MCF 10A (cell line): ENCODE measurements at regions of chr7 and their contacts with region 1.

Region 1: DNA sequence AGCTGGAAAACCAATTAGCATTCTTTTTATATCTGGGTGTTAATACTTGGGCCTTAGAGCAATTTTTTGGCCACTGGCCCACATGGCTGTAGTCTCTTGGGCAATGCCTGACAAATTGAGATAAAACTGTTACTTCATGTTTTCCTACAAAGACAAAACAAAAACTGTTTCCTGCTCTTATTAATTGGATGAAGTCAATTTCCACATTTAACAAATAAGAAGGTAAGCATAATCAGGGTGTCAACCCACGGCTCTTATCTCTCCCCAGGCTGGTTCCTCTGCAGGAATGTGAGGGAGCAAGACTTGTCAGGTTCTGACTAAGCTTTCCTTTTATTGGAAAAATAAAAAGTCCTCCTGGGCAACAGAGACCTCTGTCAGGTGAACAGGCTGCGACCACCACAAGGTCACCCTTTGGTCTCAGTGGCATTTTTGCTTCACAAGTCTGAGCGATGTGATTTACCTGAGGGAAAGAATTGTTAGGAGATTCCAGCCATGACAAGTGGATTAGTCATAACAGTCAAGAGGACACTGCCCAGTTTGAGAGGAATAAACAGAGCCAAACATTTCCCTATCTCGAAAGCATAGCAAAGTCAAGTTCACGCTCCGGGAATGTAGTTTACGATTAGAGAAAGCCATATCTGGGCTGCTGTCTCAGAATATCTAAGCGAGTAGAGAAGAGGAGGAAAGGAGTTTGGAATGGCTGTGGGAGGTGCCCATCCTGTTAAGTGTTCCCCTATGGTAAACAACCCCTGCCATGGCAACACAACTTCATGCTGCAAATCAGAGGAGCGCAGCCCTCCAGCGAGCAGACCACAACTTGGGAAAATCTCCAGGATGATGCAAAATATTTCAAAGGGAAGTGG is 144.4 kb downstream of the TES start:
- DNase-seq: peak; percentile 91
- H3K4me3 Mint-ChIP-seq: peak overlapping the region; percentile 69
- H3K27ac Mint-ChIP-seq: peak overlapping the region; percentile 98
- H3K4me1 Mint-ChIP-seq: peaks cover 42% of the 10 kb centered on the region
- H3K27me3 Mint-ChIP-seq: no peaks in the 10 kb centered on the region
- CTCF ChIP-seq: no peak

Region 2: DNA sequence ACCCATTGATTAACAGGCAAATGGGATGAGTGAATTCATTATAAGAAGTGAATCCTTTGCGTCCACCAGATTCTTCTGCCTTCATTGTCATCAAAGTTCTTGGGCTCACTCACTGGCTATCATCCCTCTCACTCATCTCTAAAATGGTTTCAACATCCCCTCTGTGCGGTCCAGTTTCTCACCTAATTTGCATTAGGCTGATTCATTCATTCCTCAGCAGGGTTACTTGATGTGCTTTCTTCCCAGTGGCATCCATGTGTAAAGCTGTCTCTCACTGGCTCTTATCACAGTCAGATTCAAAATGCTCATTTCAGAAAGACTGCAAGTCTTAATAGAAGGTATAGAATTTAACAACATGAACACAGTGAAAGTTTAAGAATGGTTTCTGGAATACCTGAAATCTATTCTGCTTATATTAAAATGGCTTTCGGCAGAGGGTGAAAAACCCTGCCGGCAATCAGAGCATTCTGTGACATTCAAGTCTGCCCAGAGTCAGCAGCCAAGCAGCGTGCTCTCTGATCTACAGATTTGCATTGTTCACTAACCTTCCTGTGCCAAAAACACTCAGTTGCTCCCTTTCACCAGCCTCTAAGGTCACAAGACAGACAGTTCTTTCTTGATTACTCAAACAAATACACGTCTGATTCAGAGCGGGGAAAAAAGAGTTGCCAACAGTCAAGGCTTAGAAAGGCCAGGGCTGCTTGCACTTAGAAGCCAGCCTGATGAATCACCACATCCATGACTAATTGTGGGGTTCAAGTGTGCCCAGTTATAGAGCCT is 37.8 kb before region 1 on chr7:
- CTCF ChIA-PET with region 1: no interaction called
- POLR2A ChIA-PET with region 1: interaction called, 7 read pairs
- intact Hi-C with region 1: loop called (anchors 1 kb)
- DNase-seq: peak; percentile 99
- H3K4me3 Mint-ChIP-seq: peak overlapping the region; percentile 42
- H3K27ac Mint-ChIP-seq: peak overlapping the region; percentile 88
- H3K4me1 Mint-ChIP-seq: peaks cover 17% of the 10 kb centered on the region
- H3K27me3 Mint-ChIP-seq: no peaks in the 10 kb centered on the region
- CTCF ChIP-seq: no peak

Region 3: DNA sequence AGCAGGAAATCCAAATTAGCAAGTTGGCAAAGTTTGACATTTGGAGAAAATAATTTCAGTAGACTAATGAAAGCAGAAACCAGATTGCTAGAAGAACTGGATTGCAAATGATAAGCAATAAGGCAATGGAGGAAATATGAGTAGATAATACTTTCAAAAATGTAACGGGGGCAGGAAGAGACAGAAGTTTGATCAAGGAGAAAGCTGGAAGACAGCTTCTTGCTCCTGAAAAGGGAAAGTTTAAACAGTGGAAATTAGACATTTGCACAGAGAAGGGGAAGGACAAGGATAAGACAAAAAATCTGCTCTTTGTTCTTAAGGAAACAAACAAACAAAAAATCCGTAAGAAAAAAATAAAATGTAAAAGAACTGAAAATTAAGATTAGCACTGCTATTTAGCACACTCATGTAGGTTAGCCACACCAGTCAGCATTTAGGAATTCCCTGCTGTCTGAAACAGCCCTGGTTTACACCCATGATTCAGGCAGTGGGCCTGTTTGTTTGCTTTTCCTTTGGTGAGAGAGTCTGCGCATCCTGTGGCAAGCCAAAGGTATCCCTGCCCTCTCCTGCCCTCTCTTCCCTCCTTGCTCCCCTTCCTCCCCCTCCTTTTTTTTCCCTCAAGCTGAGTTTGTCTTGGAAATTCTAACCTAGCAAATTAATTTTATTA is 40.5 kb after region 1 on chr7:
- CTCF ChIA-PET with region 1: no interaction called
- POLR2A ChIA-PET with region 1: interaction called, 6 read pairs
- intact Hi-C with region 1: loop called (anchors 1 kb)
- DNase-seq: peak; percentile 89
- H3K4me3 Mint-ChIP-seq: no peak overlapping the region
- H3K27ac Mint-ChIP-seq: peak overlapping the region; percentile 80
- H3K4me1 Mint-ChIP-seq: peaks cover 38% of the 10 kb centered on the region
- H3K27me3 Mint-ChIP-seq: no peaks in the 10 kb centered on the region
- CTCF ChIP-seq: no peak

Region 4: DNA sequence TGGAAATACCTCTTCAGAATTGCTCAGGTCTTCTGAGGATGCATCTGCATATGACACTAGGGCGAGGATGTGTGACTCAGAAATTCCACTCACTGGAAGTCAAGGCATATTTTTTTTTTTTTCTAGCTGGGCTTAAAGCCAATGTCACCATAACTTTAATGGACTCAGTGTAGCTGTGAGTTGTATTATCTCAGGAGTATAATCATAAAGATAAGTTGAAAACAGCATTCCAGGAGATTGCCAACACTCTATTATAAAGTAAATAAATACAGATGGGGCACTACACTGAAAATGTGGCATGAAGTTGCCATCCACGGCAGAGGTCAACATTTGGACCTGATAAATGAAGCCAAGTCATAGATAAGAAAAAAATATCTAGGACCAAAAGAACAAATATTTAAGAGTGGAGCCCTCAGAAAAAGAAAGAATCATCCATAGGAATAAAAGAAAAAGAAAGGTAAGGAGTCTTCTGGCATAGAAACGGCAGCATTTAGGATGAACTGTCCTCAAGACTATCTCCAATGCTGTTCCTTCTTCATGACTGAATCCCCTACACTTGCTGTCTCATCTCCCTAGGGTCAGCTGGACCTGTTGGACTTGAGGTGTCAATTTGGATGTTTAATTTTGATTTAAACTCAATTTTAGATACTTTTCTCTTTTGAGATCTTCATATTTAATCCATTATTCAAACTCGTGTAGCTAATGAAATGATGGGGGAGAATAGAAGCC is 71.8 kb after region 1 on chr7:
- CTCF ChIA-PET with region 1: interaction called, 5 read pairs
- POLR2A ChIA-PET with region 1: interaction called, 8 read pairs
- intact Hi-C with region 1: loop called (anchors 5 kb)
- DNase-seq: peak; percentile 80
- H3K4me3 Mint-ChIP-seq: no peak overlapping the region
- H3K27ac Mint-ChIP-seq: peak overlapping the region; percentile 78
- H3K4me1 Mint-ChIP-seq: peaks cover 41% of the 10 kb centered on the region
- H3K27me3 Mint-ChIP-seq: no peaks in the 10 kb centered on the region
- CTCF ChIP-seq: no peak

Region 5: DNA sequence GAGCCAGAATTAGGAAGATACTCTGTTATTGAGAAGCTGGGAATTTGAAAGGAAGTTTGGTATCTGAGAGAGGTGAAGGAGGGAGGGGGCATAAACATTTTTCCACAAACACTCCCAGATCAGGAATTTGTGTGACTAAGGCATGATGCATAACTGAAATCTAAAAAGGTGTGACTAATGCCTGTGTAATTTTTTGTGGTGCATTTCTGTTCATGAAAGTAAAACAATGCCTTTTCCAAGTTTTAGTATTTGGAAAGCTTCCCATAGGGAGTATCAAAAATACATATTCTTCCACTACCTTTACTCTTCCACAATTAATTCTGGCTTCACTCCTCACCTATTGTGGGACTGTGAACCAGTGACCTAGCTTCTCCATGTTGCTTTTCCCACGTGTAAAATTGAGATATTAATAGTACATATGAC is 88.3 kb after region 1 on chr7:
- CTCF ChIA-PET with region 1: no interaction called
- POLR2A ChIA-PET with region 1: interaction called, 5 read pairs
- intact Hi-C with region 1: loop called (anchors 1 kb)
- DNase-seq: peak; percentile 93
- H3K4me3 Mint-ChIP-seq: peak overlapping the region; percentile 6
- H3K27ac Mint-ChIP-seq: peak overlapping the region; percentile 93
- H3K4me1 Mint-ChIP-seq: peaks cover 38% of the 10 kb centered on the region
- H3K27me3 Mint-ChIP-seq: no peaks in the 10 kb centered on the region
- CTCF ChIP-seq: no peak

Region 6: GRCh38 chr7:116511552-116512519 is 157.1 kb after region 1 on chr7:
- CTCF ChIA-PET with region 1: no interaction called
- POLR2A ChIA-PET with region 1: no interaction called
- intact Hi-C with region 1: no loop called
- DNase-seq: peak; percentile 82
- H3K4me3 Mint-ChIP-seq: peak overlapping the region; percentile 76
- H3K27ac Mint-ChIP-seq: peak overlapping the region; percentile 82
- H3K4me1 Mint-ChIP-seq: peaks cover 35% of the 10 kb centered on the region
- H3K27me3 Mint-ChIP-seq: no peaks in the 10 kb centered on the region
- CTCF ChIP-seq: no peak

Region 7: DNA sequence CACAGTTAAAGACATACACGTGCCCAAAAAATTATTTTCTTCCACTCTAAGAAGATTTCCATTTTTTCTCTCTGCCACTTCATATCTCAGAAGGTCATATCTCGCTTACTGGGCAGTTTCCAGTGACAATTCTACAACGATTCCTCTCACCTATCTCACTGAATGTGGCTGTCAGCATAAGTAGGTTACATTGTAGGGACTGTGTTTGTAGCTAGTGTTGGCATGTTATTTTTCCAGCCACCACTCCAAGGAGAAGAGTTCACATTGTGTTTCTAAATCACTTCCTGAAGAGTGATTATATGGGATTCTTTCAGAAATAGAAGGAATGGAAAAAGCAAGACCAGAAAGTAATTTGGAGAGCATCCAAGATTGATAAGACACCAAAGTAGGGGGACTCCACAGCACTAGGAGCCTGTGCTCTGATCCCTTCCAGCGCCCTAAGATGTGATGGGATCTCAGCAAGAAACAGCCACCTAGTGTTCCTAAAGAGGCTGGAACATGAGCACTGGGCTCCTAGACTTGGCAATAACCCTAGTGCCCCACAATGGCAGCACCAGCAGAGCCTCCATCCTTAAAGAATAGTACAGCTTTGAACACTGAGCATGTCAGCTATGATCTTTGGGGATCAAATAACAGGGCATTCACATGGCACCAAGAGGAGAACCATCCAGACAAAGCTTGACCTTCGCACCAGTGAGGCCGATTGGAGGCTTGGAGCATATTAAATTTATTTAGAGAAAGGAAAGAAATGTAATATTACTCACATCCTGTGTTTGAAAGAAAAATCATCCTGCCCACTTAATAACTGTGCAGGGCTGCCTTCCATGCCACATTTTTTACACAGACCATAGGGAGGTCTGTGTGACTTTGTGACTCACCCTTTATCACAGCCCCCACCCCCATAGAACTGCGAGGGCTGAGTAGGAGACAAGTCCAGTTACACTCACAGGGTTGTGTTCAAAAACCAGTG is 221.9 kb after region 1 on chr7:
- CTCF ChIA-PET with region 1: no interaction called
- POLR2A ChIA-PET with region 1: interaction called, 3 read pairs
- intact Hi-C with region 1: loop called (anchors 5 kb)
- DNase-seq: peak; percentile 70
- H3K4me3 Mint-ChIP-seq: no peak overlapping the region
- H3K27ac Mint-ChIP-seq: peak overlapping the region; percentile 51
- H3K4me1 Mint-ChIP-seq: peaks cover 34% of the 10 kb centered on the region
- H3K27me3 Mint-ChIP-seq: no peaks in the 10 kb centered on the region
- CTCF ChIP-seq: no peak

Region 8: DNA sequence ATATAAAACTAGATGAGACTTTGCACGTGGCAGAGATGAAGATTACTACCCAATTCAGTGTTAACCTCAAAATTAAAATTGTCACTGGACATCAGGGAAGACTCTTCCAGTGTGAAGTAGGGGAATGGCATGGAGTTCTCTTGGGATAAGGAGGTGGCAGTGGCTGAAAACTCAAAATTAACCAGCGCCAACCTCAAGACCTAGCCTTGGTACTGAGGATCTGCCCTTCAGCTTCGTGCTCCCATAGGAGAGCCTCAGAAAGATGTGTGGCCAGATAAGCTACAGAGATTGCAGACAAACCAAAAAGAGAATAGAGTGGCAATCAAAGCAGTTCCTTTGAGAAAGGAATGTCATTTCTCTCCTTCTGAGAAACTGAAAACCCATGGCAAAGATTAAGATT is 460.3 kb after region 1 on chr7:
- CTCF ChIA-PET with region 1: no interaction called
- POLR2A ChIA-PET with region 1: no interaction called
- intact Hi-C with region 1: no loop called
- DNase-seq: no peak
- H3K4me3 Mint-ChIP-seq: no peak overlapping the region
- H3K27ac Mint-ChIP-seq: no peak overlapping the region
- H3K4me1 Mint-ChIP-seq: peaks cover 9% of the 10 kb centered on the region
- H3K27me3 Mint-ChIP-seq: no peaks in the 10 kb centered on the region
- CTCF ChIP-seq: no peak